Activated B cell treated with CpG ODN at 0.5 μM for 24 hours (primary cell): ENCODE measurements at regions of chr4 and their contacts with region 1.

Region 1: DNA sequence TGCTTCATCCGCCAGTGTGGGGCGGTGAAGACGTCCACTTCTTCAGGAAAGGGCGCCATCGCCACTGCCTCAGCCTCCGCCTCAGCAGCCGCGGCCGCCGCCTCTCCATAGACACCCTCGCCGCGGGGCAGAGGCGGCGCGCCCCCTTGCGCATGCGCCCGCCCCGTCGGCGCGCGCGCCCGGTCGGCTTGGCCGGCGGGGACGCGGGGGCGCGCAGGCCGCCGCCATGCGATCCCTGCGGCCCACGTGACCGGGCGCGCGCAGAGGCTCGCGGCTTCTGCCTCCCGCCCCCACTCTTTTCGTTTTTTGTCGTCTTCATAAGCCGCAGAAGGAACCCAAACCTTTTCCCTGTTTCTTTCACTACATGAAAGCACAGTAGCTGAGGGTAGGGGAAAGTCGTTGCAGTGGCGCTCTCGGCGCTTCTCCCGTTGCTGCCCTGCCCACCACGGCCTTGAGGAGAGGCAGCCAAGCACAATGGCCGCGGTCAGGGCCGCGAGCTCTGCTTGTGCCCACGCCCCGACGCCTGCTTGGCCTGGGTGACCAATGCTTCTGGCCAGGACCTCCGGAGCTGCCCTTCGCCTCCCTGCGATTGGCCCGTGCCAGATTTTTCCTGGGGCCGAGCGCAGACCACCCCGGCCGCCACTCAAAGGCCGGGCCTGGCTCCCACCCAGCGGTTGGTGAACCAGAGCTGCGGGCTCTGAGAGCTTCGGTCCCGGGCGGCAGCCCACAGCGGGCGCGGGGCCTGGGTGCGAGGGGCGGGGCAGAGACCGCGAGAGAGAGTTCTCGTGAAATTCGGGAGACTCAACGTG is at the start of gene FBXL5:
- DNase-seq: peak; percentile 89
- ATAC-seq: peak; percentile 82
- H3K4me3 Mint-ChIP-seq: peak within 1 kb of the TSS; percentile 95
- H3K27ac Mint-ChIP-seq: peak within 1 kb of the TSS; percentile 97
- H3K4me1 Mint-ChIP-seq: peaks cover 42% of the 10 kb centered on the region
- H3K27me3 Mint-ChIP-seq: no peaks in the 10 kb centered on the region
- CTCF ChIP-seq: no peak
- total RNA-seq, gene FBXL5: 29.9 and 32.1 TPM in 2 replicates

Region 2: GRCh38 chr4:14871676-14872430 is 783.6 kb before region 1 on chr4:
- CTCF ChIA-PET with region 1: no interaction called
- POLR2A ChIA-PET with region 1: no interaction called
- intact Hi-C with region 1: loop called (anchors 10 kb)
- DNase-seq: no peak
- ATAC-seq: no peak
- H3K4me3 Mint-ChIP-seq: no peak overlapping the region
- H3K27ac Mint-ChIP-seq: no peak overlapping the region
- H3K4me1 Mint-ChIP-seq: peaks cover under 1% of the 10 kb centered on the region
- H3K27me3 Mint-ChIP-seq: peaks cover 12% of the 10 kb centered on the region
- CTCF ChIP-seq: no peak

Region 3: DNA sequence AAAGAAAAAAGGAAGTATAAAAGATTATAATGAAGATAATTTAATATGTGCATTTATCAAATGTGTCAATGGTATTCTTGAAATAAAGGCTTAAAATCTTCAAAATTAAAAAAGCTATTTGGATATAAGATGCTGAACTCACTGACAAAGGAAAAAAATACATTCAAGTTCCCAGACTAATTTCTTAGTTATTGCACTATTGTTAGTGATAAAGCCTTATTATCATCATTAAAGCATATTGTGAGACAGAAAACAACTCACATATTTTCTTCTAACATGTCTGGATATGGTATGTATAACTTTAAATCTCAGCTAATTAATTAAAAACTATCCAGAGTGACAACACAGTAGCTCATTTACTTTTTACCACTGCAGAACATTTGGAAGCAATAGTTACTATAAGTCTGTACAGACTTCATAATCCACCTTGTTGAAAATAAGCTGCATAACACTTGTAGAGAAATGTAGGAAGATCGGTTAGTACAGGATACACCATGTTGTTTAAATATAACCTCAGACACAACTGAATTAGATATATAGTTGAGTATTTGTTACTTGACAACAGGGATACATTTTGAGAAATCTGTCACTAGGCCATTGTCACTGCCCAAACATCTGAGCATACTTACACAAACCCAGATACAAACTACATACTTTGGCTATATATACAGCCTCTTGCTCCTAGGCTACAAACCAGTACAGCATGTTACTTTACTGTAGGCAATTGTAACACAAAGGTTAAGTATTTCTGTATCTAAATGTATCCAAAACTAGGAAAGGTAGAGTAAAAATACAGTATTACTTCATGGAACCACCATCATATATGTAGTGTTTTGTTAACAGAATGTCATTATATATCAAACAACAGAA is 13.4 kb after region 1 on chr4:
- CTCF ChIA-PET with region 1: no interaction called
- POLR2A ChIA-PET with region 1: interaction called, 4 read pairs
- intact Hi-C with region 1: loop called (anchors 1 kb)
- DNase-seq: no peak
- ATAC-seq: no peak
- H3K4me3 Mint-ChIP-seq: no peak overlapping the region
- H3K27ac Mint-ChIP-seq: no peak overlapping the region
- H3K4me1 Mint-ChIP-seq: peaks cover 19% of the 10 kb centered on the region
- H3K27me3 Mint-ChIP-seq: no peaks in the 10 kb centered on the region
- CTCF ChIP-seq: no peak

Region 4: DNA sequence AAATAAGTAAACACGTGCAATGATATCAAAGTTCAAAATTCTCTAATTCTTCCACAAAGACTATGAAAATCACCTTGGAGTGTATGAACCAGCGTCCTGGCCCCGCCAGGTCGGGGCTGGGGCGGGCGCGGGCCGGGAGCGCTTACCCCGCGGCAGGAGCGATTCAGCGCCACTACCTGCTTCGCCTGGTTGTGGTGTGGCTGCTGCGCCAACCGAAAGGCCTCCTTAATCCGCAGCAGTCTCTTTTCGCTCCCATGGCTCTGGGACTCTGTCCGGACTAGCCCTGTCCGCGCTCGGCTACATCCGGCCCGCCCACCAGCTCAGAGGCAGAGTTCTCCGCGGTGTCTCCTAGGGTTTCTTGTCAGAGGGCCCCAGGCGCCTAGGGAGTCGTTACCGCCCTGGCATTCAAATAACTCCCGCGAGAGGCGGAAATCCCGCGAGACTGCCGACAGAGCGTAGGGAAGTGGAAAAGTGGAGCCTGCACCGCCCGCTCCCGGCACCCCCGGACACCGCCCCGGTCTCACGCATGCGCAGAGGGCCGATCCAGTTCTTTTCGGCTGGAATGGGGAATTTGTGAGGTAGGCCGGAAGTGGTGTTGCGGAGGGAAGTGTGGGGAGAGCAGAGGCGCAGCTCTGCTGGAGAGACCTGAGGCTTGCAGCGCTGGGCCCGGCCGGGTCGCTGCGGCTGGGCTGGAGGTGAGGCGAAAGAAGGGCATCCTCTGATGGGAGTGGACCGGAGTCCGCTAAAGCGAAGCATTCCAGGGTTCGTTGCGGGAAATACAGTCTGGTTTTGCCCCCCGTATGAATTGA is 26.0 kb after region 1 on chr4 and contains the start of gene FAM200B:
- CTCF ChIA-PET with region 1: no interaction called
- POLR2A ChIA-PET with region 1: interaction called, 14 read pairs
- intact Hi-C with region 1: loop called (anchors 1 kb)
- DNase-seq: peak; percentile 98
- ATAC-seq: peak; percentile 98
- H3K4me3 Mint-ChIP-seq: peak within 1 kb of the TSS; percentile 97
- H3K27ac Mint-ChIP-seq: peak within 1 kb of the TSS; percentile 93
- H3K4me1 Mint-ChIP-seq: peaks cover 27% of the 10 kb centered on the region
- H3K27me3 Mint-ChIP-seq: no peaks in the 10 kb centered on the region
- CTCF ChIP-seq: no peak
- total RNA-seq, gene FAM200B: 9.1 and 11.3 TPM in 2 replicates